Left cardiac atrium (tissue), 4 donors: ENCODE measurements at regions of chr3 and their contacts with region 1.

Region 1: DNA sequence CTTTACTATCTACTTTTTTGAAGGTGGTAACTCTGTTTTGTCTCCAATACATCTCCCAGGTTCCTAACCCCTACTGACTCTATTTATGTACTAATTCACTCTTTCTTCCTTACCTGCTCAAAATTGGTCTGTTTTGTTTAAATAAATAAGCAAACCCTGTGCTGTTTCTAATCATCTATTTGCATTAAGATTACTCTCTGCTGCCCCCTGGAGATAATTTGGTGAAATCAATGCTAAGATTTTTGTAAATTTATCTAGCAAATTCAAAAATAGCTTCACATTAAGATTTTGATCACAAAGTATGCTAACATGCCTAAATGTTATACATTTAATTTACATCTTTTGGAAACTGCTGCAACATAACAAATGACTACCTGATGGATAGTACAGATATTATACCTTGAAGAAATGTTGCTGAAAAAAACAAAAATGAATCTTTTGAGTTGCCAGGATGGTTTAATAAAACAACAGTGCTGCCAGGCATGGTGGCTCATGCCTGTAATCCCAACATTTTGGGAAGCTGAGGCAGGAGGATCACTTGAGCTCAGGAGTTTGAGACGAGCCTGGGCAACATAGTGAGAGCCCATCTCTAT is 4.4 kb upstream of the CD200R1 start:
- DNase-seq: no peak
- ATAC-seq: no peak

Region 2: DNA sequence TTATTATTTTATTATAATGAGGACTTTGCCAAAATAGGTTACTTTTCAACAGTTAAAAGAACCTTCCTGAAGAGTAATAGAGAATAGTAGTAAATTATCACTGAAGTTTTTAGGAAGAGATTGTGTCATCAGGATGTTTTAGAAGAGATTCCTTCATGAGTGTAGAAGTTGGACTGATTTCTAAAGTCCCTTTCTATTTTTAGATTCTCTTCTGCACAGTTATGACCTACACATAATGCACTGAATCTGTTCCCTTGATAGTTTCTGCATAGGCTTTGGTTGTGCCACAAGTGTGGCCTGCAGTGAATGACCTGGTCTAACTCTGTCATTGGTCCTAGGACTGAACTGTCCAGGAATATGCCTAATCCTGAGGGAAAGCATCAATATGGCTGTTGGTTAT is 393.6 kb before region 1 on chr3:
- intact Hi-C with region 1: loop called in 1 of 2 experiments (anchors 2 kb)
- DNase-seq: no peak
- ATAC-seq: no peak

Region 3: DNA sequence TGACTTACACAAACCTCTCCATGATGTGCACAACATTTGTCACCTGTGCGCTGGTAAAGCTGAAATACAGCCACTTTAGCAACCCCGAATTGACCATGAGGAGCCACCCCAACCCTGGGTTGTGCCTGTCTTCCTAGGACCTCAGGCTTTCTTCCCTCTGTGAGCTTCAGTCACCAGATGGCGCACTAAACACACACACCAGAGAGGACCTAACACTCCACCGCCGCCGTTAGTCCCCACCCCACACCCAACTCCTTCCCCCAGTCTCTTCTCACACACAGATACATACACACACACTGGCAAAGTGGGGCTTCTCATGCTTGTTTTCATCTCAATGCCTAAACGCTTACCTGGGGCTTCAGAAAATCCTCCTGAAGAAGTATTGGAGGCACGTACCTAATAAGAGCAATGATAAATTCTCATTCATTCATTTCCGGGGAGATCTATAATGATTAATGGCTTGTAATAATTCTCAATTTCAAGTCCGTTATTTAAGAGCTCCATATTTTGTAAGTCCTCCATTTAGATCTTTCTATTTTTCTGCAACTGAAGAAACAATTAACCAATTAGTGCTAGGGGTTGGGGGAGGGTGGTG is 336.3 kb before region 1 on chr3:
- intact Hi-C with region 1: loop called (anchors 1 to 5 kb)
- DNase-seq: peak; percentile 87
- ATAC-seq: peak; percentile 83 to 86